Activated naive CD4-positive, alpha-beta T cell treated with anti-CD3 and anti-CD28 coated beads, Interleukin-2, amount 10 ng/mL, durations not matched to agents 7 days and 5 days (primary cell): ENCODE measurements at regions of chr16 and their contacts with region 1.

Region 1: GRCh38 chr16:67561824-67562525 is 351 bp upstream of the CTCF start:
- DNase-seq: peak; percentile 99
- H3K4me3 Mint-ChIP-seq: peak overlapping the region; percentile 89
- H3K27ac Mint-ChIP-seq: peak overlapping the region; percentile 97
- H3K4me1 Mint-ChIP-seq: peaks cover 57% of the 10 kb centered on the region
- H3K27me3 Mint-ChIP-seq: no peaks in the 10 kb centered on the region

Region 2: GRCh38 chr16:67667817-67668494 is 106.0 kb after region 1 on chr16:
- CTCF ChIA-PET with region 1: interaction called, 16 read pairs
- DNase-seq: peak; percentile 93
- H3K4me3 Mint-ChIP-seq: peak overlapping the region; percentile 87
- H3K27ac Mint-ChIP-seq: peak overlapping the region; percentile 86
- H3K4me1 Mint-ChIP-seq: peaks cover 32% of the 10 kb centered on the region
- H3K27me3 Mint-ChIP-seq: peaks cover 4% of the 10 kb centered on the region